ENCODE measurements at regions of chr20 and their contacts with region 1.

Region 1: DNA sequence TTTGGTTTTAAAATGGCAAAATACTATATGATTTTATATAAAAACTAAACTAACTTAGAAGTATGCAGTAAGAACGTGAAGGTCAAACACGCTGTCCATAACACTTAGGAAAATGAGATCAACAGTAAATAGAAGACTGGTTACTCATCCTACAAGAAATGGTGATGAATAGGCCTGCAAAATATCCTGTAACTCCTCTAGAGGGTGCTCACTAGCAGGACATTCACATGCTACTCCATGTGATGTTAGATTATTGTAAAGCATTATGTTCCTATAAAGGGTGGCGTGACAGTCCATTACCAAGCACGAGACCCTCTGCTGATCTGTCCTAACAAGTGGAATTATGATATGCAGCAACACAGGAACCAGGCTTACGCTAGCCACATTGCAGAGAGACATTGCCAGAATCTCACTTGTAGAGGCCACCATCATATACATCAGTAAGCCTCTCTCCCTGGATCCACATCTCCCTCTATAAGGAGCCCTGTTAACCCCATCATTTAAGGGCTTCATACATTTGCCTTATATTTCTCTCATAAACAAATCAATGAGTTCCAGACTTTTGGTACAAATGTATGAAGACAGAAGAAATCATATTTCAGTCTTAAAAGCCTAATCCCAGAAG is 18.0 kb upstream of the DEFB129 start:
- DNase-seq: no peak
- H3K4me3 ChIP-seq: no peak overlapping the region
- H3K27ac ChIP-seq: no peak overlapping the region
- H3K4me1 ChIP-seq: no peaks in the 10 kb centered on the region
- H3K27me3 ChIP-seq: no peaks in the 10 kb centered on the region
- CTCF ChIP-seq: peak; percentile 19 to 67 (median 56)
- POLR2A ChIP-seq: no peak

Region 2: DNA sequence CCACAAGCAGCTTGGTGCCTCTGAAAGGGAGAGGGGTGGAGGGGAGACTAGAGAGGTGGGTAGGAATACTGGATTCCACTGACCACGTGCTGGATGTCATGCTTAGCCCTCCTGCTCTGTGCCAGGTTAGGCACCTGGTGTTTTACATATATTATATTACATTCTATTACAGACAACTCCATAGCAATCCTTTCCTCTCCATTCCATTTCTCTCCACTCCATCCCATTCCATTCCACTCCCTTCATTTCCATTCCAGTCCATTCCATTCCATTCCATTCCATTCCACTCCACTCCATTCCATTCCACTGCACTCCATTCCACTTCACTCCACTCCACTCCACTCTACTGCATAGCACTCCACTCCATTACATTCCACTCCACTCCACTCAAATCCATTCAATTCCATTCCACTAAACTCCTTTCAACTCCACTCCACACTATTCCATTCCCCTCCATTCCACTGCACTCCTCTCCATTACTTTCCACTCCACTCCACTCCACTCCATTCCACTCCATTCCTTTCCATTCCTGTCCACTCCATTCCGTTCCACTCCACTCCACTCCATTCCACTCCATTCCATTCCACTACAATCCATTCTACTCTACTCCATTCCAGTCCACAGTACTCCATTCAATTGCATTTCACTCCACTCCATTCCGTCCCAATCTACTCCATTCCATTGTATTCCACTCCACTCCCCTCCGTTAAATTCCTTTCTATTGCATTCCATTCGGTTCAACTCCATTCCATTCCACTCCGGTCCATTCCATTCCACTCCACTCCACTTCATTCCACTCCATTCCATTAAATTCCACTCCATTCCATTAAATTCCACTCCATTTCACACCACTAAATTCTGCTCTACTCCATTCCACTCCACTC is 148.8 kb before region 1 on chr20:
- intact Hi-C with region 1: no loop called
- DNase-seq: no peak
- H3K4me3 ChIP-seq: no peak overlapping the region
- H3K27ac ChIP-seq: no peak overlapping the region
- H3K4me1 ChIP-seq: no peaks in the 10 kb centered on the region
- H3K27me3 ChIP-seq: peaks cover 0 to 17% (median 0%) of the 10 kb centered on the region in 7 donors
- CTCF ChIP-seq: no peak
- POLR2A ChIP-seq: no peak

Region 3: DNA sequence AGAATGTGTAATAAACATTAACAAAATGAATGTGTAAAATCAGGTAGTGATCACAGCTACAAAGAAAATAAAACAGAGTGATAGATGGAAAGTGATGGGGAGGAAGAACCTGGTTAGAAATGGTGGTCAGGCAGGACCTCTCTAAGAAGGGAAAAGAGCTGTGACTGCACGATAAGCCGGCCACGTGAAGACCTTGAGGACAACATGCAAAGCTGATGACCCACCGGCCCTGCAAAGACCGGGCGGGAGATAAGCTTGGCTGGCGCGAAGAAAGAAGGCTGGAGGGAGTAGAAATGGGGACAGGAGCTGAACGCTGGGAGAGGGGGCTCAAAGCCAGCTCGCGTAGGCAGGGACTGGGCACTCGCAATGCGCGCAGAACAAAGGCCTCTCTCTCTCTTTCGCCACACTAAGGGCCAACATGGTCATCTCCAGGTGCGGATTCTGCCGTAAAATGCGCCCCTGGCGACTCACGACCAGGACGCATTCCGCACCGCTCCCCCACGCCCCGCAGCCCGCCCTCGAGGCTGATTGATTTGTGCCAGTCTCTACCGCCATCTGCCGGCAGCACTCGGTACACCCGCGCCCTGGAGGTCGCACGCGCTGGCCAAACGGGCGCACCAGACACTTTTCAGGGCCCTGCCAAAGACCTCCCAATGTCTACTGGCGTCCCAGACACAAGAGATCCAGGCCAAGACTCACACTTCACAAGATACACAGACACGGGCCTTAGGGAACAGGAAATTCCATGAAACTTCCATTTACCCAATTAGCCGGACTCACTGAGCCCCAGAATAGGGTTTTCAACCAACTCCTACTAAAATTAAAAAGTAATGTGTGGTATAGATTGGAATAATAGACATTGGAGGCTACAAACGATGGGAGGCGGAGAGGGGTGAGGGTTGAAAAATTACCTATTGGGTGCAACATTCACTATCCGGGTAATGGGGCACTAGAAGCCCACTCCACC is 57.8 kb after region 1 on chr20:
- intact Hi-C with region 1: loop called (anchors 5 kb)
- DNase-seq: peak; percentile 96
- H3K4me3 ChIP-seq: peak overlapping the region in 7 of 8 donors; percentile 26 to 70 (median 42)
- H3K27ac ChIP-seq: peak overlapping the region in 2 of 8 donors; percentile 14 to 26
- H3K4me1 ChIP-seq: peaks cover 0 to 14% (median 9%) of the 10 kb centered on the region in 6 donors
- H3K27me3 ChIP-seq: peaks cover 0 to 5% (median 0%) of the 10 kb centered on the region in 7 donors
- CTCF ChIP-seq: peak; percentile 93 to 98 (median 97)
- POLR2A ChIP-seq: no peak

Region 4: GRCh38 chr20:324177-325044 is 115.4 kb after region 1 on chr20:
- intact Hi-C with region 1: loop called (anchors 5 kb)
- DNase-seq: peak; percentile 97
- H3K4me3 ChIP-seq: peak overlapping the region; percentile 69 to 94 (median 78)
- H3K27ac ChIP-seq: peak overlapping the region; percentile 90 to 98 (median 94)
- H3K4me1 ChIP-seq: peaks cover 3 to 54% (median 44%) of the 10 kb centered on the region in 6 donors
- H3K27me3 ChIP-seq: peaks cover 0 to 14% (median 0%) of the 10 kb centered on the region in 7 donors
- CTCF ChIP-seq: peak in 9 of 11 experiments; percentile 9 to 57 (median 44)
- POLR2A ChIP-seq: peak in 1 of 3 donors; percentile 7

Region 5: GRCh38 chr20:577167-577791 is 368.2 kb after region 1 on chr20:
- intact Hi-C with region 1: no loop called
- DNase-seq: no peak
- H3K4me3 ChIP-seq: no peak overlapping the region
- H3K27ac ChIP-seq: no peak overlapping the region
- H3K4me1 ChIP-seq: no peaks in the 10 kb centered on the region
- H3K27me3 ChIP-seq: peaks cover 0 to 53% (median 13%) of the 10 kb centered on the region in 7 donors
- CTCF ChIP-seq: no peak
- POLR2A ChIP-seq: no peak